ENCODE measurements at regions of chr7 and their contacts with region 1.

Region 1: GRCh38 chr7:30164567-30164966 is 29.8 kb downstream of the MTURN start:
- DNase-seq: no peak
- H3K4me3 ChIP-seq: no peak overlapping the region
- H3K27ac ChIP-seq: no peak overlapping the region
- H3K4me1 ChIP-seq: peaks cover 0 to 25% (median 12%) of the 10 kb centered on the region in 4 donors
- H3K27me3 ChIP-seq: no peaks in the 10 kb centered on the region
- CTCF ChIP-seq: peak; percentile 42 to 59 (median 52)
- EP300 ChIP-seq: no peak
- POLR2A ChIP-seq: no peak

Region 2: DNA sequence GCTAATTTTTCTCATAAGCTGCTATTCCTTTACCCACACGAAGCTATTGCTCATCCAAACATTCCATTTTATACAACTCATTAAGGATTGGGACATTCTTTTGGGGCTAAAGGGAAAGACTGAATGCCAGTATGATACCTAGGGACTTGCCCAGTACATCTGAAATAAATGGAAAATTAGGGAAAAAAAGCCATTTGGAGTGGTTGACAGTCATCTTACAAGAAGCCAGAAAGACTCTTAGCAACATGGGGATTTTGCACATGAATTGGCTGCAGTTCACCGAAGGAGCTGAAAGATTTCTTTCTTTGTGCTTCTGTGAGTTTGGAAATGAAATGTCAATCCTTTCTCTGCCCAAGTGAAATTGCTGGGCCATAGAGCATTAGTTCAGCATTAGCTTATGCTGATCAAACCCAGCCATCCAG is 73.1 kb before region 1 on chr7:
- in situ Hi-C with region 1: no loop called
- intact Hi-C with region 1: no loop called
- DNase-seq: no peak
- H3K4me3 ChIP-seq: no peak overlapping the region
- H3K27ac ChIP-seq: no peak overlapping the region
- H3K4me1 ChIP-seq: no peaks in the 10 kb centered on the region
- H3K27me3 ChIP-seq: no peaks in the 10 kb centered on the region
- CTCF ChIP-seq: no peak
- EP300 ChIP-seq: no peak
- POLR2A ChIP-seq: no peak

Region 3: DNA sequence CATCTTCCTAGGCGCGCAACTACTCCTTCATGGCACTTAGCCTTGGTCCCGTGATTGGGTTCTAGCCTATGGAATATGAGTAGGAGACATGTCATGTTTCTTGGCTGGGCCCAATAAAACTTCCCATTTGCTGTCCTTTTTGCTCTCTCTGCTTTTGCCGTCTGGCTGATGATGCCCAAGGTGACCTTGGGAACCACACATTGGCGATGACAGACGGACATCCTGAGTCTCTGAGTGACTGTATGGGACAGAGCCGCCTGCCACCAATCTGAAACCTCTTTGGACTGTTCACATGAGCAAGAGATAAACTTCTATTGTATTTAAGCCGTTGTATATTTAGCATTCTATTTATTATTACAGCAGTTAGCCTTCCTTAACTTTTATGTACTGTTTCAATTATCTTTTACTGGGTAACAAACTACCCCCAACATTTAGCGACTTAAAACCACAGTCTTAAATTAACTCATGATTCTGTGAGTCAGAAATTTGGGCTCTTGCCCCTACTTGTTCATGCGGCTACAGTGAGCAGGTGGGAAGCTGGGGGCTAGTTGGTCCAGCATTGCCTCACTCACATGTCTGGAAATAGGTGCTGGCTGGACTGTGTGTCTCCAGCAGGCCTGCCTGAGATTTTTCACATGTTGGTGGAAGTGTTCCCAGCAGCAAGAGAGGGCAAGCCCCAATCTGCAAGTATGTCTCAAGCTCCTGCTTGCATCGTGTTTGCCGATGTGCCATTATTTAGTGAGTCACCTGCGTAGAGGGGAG is 242.3 kb after region 1 on chr7:
- in situ Hi-C with region 1: loop called (anchors 5 to 25 kb)
- intact Hi-C with region 1: loop called (anchors 5 kb)
- DNase-seq: no peak
- H3K4me3 ChIP-seq: no peak overlapping the region
- H3K27ac ChIP-seq: no peak overlapping the region
- H3K4me1 ChIP-seq: no peaks in the 10 kb centered on the region
- H3K27me3 ChIP-seq: no peaks in the 10 kb centered on the region
- CTCF ChIP-seq: no peak
- EP300 ChIP-seq: no peak
- POLR2A ChIP-seq: no peak

Region 4: DNA sequence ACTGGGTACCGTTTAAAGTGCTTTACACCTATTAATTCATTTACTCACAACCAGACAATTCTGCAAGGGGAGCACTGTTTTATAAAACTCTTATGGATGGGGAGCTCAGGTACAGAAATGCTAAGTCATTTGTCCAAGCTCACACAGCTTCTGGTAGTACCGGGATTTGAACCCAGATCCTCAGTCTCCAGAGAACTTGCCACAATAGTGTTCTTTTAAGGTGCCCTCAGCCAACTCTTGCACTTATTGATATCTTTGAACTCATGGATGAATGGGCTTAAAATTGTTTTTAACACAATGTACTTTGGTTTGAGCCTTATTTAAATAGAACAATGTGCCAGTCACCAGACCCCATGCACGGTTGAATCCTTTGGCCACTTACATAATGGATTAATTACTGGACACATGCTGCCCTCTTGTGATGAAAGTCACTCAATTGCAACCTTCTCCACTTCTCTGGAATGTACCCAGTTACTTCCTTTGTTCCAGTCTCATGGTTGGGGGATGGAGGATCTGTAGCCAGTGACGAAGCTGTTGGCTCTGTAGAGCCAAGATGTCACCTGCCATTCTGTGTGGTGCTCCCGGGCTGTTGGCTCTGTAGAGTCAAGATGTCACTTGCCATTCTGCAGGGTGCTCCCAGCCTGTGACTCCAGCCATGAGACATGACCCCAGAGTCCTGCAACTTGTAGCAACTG is 248.4 kb after region 1 on chr7:
- in situ Hi-C with region 1: loop called (anchors 5 to 25 kb)
- intact Hi-C with region 1: loop called (anchors 5 kb)
- DNase-seq: peak; percentile 32
- H3K4me3 ChIP-seq: no peak overlapping the region
- H3K27ac ChIP-seq: no peak overlapping the region
- H3K4me1 ChIP-seq: no peaks in the 10 kb centered on the region
- H3K27me3 ChIP-seq: no peaks in the 10 kb centered on the region
- CTCF ChIP-seq: peak; percentile 45 to 68 (median 47)
- EP300 ChIP-seq: no peak
- POLR2A ChIP-seq: no peak

Region 5: DNA sequence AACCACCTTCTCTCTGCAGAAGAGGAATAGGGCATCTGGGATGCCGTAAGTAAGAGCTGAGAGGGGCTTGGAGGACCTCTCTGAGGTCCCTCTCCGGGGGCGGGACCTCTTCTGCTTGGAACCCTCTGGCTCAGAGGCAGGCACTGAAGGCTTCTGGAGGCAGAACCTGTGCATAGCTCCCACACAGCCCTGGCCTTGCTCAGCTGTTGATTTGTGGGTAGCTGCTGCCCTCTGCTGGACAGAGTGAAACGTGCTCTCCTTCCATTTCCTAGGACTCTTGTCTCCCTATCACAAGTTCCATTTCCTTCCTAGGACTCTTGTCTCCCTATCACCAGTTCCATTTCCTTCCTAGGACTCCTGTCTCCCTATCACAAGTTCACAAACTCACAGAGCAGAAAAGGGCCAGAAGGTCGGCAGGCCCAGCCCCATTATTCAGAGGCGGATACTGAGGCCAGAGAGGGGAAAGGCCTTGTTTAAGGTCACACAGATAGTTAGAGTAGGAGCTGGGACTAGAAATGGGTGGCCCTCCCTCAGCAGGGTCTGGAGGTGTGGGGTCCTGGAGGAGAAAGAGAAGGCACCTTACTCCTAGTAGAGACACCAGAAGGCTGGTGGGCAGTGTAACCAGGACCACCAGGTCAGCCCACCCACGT is 399.8 kb after region 1 on chr7:
- in situ Hi-C with region 1: loop called in 3 of 4 experiments (anchors 10 to 25 kb)
- intact Hi-C with region 1: no loop called
- DNase-seq: peak; percentile 84
- H3K4me3 ChIP-seq: no peak overlapping the region
- H3K27ac ChIP-seq: no peak overlapping the region
- H3K4me1 ChIP-seq: no peaks in the 10 kb centered on the region
- H3K27me3 ChIP-seq: no peaks in the 10 kb centered on the region
- CTCF ChIP-seq: peak; percentile 78 to 93 (median 81)
- EP300 ChIP-seq: no peak
- POLR2A ChIP-seq: no peak

Region 6: DNA sequence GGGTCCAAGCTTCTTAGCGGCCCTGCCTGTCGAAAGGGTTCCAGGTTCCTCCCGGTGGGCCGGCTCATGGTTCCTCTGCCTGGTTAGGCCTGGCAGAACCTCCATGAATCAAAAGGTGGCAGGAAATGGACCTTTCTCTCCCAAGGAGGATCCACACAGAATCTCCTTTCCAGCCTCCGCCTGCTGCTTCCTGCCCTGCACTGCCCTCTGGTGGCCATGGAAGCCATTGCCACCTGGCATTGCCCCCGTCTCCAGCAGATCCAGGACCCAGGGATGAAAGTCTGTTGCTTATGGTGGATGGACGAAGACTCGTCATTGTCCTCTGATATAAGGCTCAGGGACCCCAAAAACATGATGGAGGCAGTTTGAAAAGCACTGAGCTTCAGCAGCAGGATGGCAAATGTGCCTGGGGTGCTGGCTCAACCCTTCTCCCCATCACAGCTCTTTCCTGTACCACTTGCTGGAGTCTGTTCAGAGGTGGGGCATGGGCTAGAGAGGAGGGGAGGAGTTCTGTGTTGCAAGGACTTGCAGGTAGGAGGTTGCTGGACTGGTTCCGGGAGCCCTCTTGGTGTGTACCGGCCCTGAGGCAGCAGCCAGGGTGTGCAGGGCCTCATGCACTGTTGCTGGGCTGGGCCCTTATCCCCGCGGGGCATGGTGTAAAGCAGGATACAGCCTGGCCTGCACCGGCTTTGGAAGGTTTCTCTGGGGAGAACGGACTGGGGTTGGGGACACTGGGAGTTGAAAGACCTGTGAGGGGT is 576.0 kb after region 1 on chr7:
- in situ Hi-C with region 1: loop called in 1 of 4 experiments (anchors 25 kb)
- intact Hi-C with region 1: no loop called
- DNase-seq: peak; percentile 83
- H3K4me3 ChIP-seq: no peak overlapping the region
- H3K27ac ChIP-seq: no peak overlapping the region
- H3K4me1 ChIP-seq: no peaks in the 10 kb centered on the region
- H3K27me3 ChIP-seq: no peaks in the 10 kb centered on the region
- CTCF ChIP-seq: peak; percentile 94 to 99 (median 98)
- EP300 ChIP-seq: no peak
- POLR2A ChIP-seq: no peak